H1 (cell line): ENCODE measurements at regions of chr11 and their contacts with region 1.

Region 1: GRCh38 chr11:59429924-59430516 is 3.8 kb upstream of the OR5A2 start:
- DNase-seq: peak in 1 of 2 experiments; percentile 48
- H3K4me3 ChIP-seq: no peak overlapping the region
- H3K27ac ChIP-seq: no peak overlapping the region
- H3K4me1 ChIP-seq: peaks cover 3 to 5% (median 4%) of the 10 kb centered on the region in 4 experiments; a peak in 6 of 7 replicates
- H3K27me3 ChIP-seq: no peaks in the 10 kb centered on the region
- CTCF ChIP-seq: peak in 2 of 3 experiments; percentile 66 to 84; a peak in 2 of 4 replicates
- EP300 ChIP-seq: no peak
- POLR2A ChIP-seq: no peak
- RAD21 ChIP-seq: peak; percentile 92

Region 2: GRCh38 chr11:59263225-59263894 is 166.7 kb before region 1 on chr11:
- CTCF ChIA-PET with region 1: interaction called, 74 read pairs
- POLR2A ChIA-PET with region 1: no interaction called
- DNase-seq: peak in 1 of 2 experiments; percentile 82
- H3K4me3 ChIP-seq: no peak overlapping the region
- H3K27ac ChIP-seq: no peak overlapping the region
- H3K4me1 ChIP-seq: no peaks in the 10 kb centered on the region
- H3K27me3 ChIP-seq: no peaks in the 10 kb centered on the region
- CTCF ChIP-seq: peak; percentile 70 to 75 (median 72)
- EP300 ChIP-seq: no peak
- POLR2A ChIP-seq: no peak
- RAD21 ChIP-seq: peak; percentile 83 to 90

Region 3: DNA sequence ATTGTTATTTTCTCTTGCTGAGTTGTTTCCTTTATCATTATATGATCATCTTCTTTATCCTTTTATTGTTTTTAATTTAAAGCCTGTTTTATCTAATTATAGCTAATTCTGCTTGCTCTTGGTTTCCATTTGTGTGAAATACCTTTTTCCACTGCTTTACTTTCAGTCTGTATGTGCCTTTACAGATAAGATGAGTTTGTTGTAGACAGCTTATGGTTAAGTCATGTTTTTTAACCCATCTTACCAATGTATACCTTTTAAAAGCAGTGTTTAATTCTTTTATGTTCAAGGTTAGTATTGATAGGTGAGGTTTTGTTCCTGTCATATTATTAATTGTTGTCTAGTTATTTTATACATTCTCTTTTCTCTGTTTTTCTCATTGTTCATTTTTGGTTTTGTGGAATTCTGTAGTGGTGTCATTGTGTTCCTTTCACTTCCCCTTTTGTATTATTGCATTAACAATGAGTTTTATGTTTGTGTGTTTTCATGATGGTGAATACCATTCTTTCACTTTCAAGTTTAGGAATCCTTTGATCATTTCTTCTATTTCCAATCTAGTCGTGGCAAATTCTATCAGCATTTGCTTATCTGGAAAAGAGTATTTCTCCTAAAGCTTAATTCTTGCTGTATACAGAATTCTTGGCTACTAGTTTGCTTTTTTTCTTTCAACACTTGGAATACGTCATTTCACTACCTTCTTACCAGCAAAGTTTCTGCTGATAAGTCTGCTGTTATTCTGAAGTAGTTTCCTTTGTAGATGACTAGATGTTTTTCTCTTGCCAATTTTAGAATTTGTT is 49.6 kb before region 1 on chr11:
- CTCF ChIA-PET with region 1: no interaction called
- POLR2A ChIA-PET with region 1: no interaction called
- DNase-seq: no peak
- H3K4me3 ChIP-seq: no peak overlapping the region
- H3K27ac ChIP-seq: no peak overlapping the region
- H3K4me1 ChIP-seq: no peaks in the 10 kb centered on the region; a peak in 1 of 7 replicates
- H3K27me3 ChIP-seq: no peaks in the 10 kb centered on the region
- CTCF ChIP-seq: no peak
- EP300 ChIP-seq: no peak
- POLR2A ChIP-seq: no peak
- RAD21 ChIP-seq: no peak

Region 4: GRCh38 chr11:59401262-59401552 is 28.8 kb before region 1 on chr11:
- CTCF ChIA-PET with region 1: no interaction called
- POLR2A ChIA-PET with region 1: no interaction called
- DNase-seq: no peak
- H3K4me3 ChIP-seq: no peak overlapping the region
- H3K27ac ChIP-seq: no peak overlapping the region
- H3K4me1 ChIP-seq: no peaks in the 10 kb centered on the region
- H3K27me3 ChIP-seq: no peaks in the 10 kb centered on the region; a peak in 1 of 7 replicates
- CTCF ChIP-seq: no peak
- EP300 ChIP-seq: no peak
- POLR2A ChIP-seq: no peak
- RAD21 ChIP-seq: no peak

Region 5: DNA sequence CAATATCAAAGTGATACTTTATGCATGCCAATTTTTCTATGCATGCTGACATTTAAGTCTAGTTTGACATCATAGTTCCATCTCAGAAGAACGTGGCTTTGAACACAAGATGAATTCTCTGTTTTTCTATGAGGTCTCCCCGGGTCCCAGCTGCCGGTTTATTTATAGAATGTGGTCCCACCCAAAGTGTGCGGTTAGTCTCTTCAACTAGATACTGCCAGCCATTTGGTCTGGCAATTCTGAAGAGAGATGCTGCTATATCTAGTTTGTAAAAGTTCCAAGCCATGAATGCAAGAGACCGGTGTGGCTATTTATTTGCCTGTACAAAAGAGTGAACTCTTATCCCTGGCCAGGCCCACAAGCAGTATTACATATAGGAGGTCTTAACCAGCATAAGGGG is 13.0 kb before region 1 on chr11:
- CTCF ChIA-PET with region 1: interaction called, 10 read pairs
- POLR2A ChIA-PET with region 1: no interaction called
- DNase-seq: no peak
- H3K4me3 ChIP-seq: no peak overlapping the region
- H3K27ac ChIP-seq: no peak overlapping the region
- H3K4me1 ChIP-seq: no peaks in the 10 kb centered on the region
- H3K27me3 ChIP-seq: no peaks in the 10 kb centered on the region
- CTCF ChIP-seq: no peak
- EP300 ChIP-seq: no peak
- POLR2A ChIP-seq: no peak
- RAD21 ChIP-seq: no peak

Region 6: DNA sequence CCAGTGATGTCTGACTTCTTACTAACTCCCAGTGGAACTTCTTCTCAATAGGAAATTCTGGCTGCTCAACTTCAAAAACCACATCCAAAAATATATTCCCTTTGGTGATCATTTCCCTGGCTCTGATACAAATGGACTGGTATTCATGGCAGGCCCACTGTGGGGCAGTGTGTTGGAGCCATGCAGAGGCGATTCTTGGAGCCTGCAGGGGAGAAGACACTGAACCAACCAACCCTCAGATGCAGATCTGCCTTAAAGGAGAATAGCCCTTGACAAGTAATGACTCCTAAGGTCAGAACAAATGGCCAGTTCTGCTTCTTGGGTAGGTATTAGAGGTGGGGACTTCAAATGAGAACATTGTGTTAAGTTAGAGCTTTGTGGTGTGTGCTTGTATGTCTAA is 93.5 kb after region 1 on chr11:
- CTCF ChIA-PET with region 1: no interaction called
- POLR2A ChIA-PET with region 1: no interaction called
- DNase-seq: no peak
- H3K4me3 ChIP-seq: no peak overlapping the region
- H3K27ac ChIP-seq: no peak overlapping the region
- H3K4me1 ChIP-seq: peaks cover 2 to 9% (median 6%) of the 10 kb centered on the region in 4 experiments; a peak in 4 of 7 replicates
- H3K27me3 ChIP-seq: no peaks in the 10 kb centered on the region
- CTCF ChIP-seq: peak in 1 of 3 experiments; percentile 34; a peak in 1 of 4 replicates
- EP300 ChIP-seq: no peak
- POLR2A ChIP-seq: no peak
- RAD21 ChIP-seq: 0 out of 4 replicates have a peak, but pooled peaks of 1 of the 2 experiments have one; percentile 11